ENCODE measurements at regions of chr10 and their contacts with region 1.

Region 1: GRCh38 chr10:24465891-24466818 is 257.2 kb downstream of the KIAA1217 start:
- DNase-seq: peak; percentile 84
- H3K4me3 Mint-ChIP-seq: peak overlapping the region; percentile 44
- H3K27ac Mint-ChIP-seq: peak overlapping the region; percentile 53
- H3K4me1 Mint-ChIP-seq: peaks cover 42% of the 10 kb centered on the region
- H3K27me3 Mint-ChIP-seq: peaks cover 21% of the 10 kb centered on the region

Region 2: GRCh38 chr10:23338178-23338828 is 1127.9 kb before region 1 on chr10:
- CTCF ChIA-PET with region 1: no interaction called
- POLR2A ChIA-PET with region 1: no interaction called
- intact Hi-C with region 1: loop called (anchors 10 kb)
- DNase-seq: no peak
- H3K4me3 Mint-ChIP-seq: no peak overlapping the region
- H3K27ac Mint-ChIP-seq: no peak overlapping the region
- H3K4me1 Mint-ChIP-seq: peaks cover 73% of the 10 kb centered on the region
- H3K27me3 Mint-ChIP-seq: no peaks in the 10 kb centered on the region

Region 3: DNA sequence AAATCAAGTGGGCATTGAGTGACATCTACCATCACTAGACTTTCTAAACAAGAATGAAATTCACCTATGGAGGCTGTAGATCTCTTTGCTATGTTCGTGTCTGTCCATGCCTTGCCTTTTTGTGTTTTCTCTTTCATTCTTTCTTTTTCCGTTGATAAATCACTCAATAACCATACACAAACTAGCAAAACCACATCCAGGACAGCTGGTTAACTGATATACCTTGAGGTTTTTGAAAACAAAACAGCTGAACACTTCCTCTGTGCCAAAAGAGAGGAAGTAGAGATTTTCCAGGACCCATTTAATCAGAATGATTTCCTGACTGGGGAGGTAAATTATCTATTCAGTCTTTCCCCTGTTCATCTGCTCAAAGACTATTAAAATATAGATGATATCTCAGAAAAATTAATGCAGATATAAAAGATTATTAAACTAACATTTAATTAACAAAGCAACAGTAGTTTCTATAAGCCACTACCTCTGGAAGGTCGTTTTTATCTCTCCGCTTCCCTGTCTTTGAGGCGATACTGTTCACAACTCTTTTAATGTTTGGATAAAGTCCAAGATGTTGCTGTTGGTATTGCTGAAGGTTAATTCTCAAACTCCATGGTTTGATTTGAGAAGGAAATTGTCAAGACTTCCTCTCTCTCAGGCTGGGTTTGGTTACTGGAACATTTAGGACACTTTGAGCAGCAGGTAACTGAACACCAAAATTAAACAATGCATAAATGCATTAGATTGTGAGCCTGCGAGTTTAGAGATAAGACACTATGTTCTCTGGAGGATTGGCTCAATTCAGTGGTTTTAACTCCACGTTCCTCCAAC is 1097.1 kb before region 1 on chr10:
- CTCF ChIA-PET with region 1: no interaction called
- POLR2A ChIA-PET with region 1: no interaction called
- intact Hi-C with region 1: loop called (anchors 10 kb)
- DNase-seq: no peak
- H3K4me3 Mint-ChIP-seq: peak overlapping the region; percentile 23
- H3K27ac Mint-ChIP-seq: peak overlapping the region; percentile 53
- H3K4me1 Mint-ChIP-seq: peaks cover 61% of the 10 kb centered on the region
- H3K27me3 Mint-ChIP-seq: no peaks in the 10 kb centered on the region

Region 4: GRCh38 chr10:24383681-24384106 is 82.5 kb before region 1 on chr10:
- CTCF ChIA-PET with region 1: no interaction called
- POLR2A ChIA-PET with region 1: no interaction called
- intact Hi-C with region 1: loop called (anchors 1 kb)
- DNase-seq: peak; percentile 78
- H3K4me3 Mint-ChIP-seq: peak overlapping the region; percentile 12
- H3K27ac Mint-ChIP-seq: peak overlapping the region; percentile 74
- H3K4me1 Mint-ChIP-seq: peaks cover 13% of the 10 kb centered on the region
- H3K27me3 Mint-ChIP-seq: peaks cover 23% of the 10 kb centered on the region

Region 5: GRCh38 chr10:24449321-24449740 is 16.8 kb before region 1 on chr10:
- CTCF ChIA-PET with region 1: no interaction called
- POLR2A ChIA-PET with region 1: no interaction called
- intact Hi-C with region 1: loop called (anchors 1 kb)
- DNase-seq: no peak
- H3K4me3 Mint-ChIP-seq: no peak overlapping the region
- H3K27ac Mint-ChIP-seq: no peak overlapping the region
- H3K4me1 Mint-ChIP-seq: peaks cover 28% of the 10 kb centered on the region
- H3K27me3 Mint-ChIP-seq: peaks cover 16% of the 10 kb centered on the region

Region 6: GRCh38 chr10:24814568-24815313 is 348.6 kb after region 1 on chr10:
- CTCF ChIA-PET with region 1: no interaction called
- POLR2A ChIA-PET with region 1: no interaction called
- intact Hi-C with region 1: no loop called
- DNase-seq: no peak
- H3K4me3 Mint-ChIP-seq: no peak overlapping the region
- H3K27ac Mint-ChIP-seq: no peak overlapping the region
- H3K4me1 Mint-ChIP-seq: peaks cover 2% of the 10 kb centered on the region
- H3K27me3 Mint-ChIP-seq: no peaks in the 10 kb centered on the region

Region 7: DNA sequence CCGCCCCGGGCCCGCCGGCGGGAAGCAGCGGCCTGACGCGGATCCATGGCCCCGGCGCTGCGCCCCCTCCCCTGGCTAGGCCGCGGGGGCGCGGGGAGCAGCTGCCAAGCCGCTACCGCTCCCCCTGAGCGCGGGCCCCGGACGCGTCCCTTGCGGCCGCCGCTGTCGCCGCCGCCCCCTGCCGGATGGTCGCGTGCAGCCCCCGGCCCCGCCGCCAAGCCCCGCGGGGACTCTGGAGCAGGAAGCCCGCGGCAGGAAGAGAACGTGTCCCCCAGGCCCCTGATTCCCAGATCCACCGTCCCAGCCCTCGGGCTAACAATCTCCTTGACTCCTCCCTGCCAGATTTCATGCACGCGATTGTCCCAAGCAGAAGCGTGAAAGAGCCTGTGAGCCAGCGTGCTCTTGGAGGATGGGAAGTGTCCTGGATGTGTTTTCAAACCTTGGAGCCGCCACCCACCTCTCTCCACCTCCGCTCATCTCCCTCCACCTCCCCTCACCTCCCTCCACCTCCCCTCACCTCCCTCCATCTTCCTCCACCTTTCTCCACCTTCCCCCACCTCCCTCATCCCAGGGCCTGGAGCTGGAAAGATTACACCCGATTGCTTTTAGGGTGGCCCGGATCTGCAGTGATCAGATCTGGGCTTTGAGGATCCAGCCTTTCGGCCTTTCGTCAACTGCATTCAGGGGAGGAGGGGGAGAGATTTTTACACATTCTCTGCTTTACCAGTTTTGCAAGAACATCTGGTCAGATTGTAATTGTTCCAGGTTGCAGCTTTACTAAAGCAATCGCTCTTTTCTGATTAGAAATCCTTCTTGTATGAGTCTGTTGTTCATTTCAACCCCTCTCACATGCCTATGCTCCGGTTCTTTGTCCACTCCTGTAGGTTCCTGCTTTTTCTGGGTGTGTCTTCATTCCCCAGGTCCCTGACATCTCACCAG is 486.8 kb after region 1 on chr10:
- CTCF ChIA-PET with region 1: no interaction called
- POLR2A ChIA-PET with region 1: no interaction called
- intact Hi-C with region 1: no loop called
- DNase-seq: peak; percentile 48
- H3K4me3 Mint-ChIP-seq: peak overlapping the region; percentile 66
- H3K27ac Mint-ChIP-seq: no peak overlapping the region
- H3K4me1 Mint-ChIP-seq: peaks cover 21% of the 10 kb centered on the region
- H3K27me3 Mint-ChIP-seq: peaks cover 4% of the 10 kb centered on the region

Measured in activated CD4-positive, alpha-beta memory T cell treated with anti-CD3 and anti-CD28 coated beads for 36 hours (primary cell).